Mucosa of descending colon (tissue), 3 donors: ENCODE measurements at regions of chr1 and their contacts with region 1.

Region 1: GRCh38 chr1:172398970-172399755 is 21.3 kb upstream of the C1orf105 start:
- DNase-seq: peak in 2 of 3 donors; percentile 28 to 40
- ATAC-seq: peak; percentile 83
- H3K4me3 ChIP-seq: no peak overlapping the region
- H3K4me1 ChIP-seq: peaks cover 15% of the 10 kb centered on the region
- CTCF ChIP-seq: peak; percentile 36

Region 2: GRCh38 chr1:172002725-172003345 is 396.3 kb before region 1 on chr1:
- intact Hi-C with region 1: loop called in 1 of 2 experiments (anchors 10 kb)
- DNase-seq: peak in 1 of 3 donors; percentile 60
- ATAC-seq: peak; percentile 34
- H3K4me3 ChIP-seq: no peak overlapping the region
- H3K4me1 ChIP-seq: no peaks in the 10 kb centered on the region
- CTCF ChIP-seq: peak; percentile 25

Region 3: GRCh38 chr1:172144445-172145061 is 254.6 kb before region 1 on chr1:
- intact Hi-C with region 1: loop called in 1 of 2 experiments (anchors 10 kb)
- DNase-seq: peak; percentile 40 to 58 (median 47)
- ATAC-seq: peak; percentile 81
- H3K4me3 ChIP-seq: no peak overlapping the region
- H3K4me1 ChIP-seq: no peaks in the 10 kb centered on the region
- CTCF ChIP-seq: no peak

Region 4: DNA sequence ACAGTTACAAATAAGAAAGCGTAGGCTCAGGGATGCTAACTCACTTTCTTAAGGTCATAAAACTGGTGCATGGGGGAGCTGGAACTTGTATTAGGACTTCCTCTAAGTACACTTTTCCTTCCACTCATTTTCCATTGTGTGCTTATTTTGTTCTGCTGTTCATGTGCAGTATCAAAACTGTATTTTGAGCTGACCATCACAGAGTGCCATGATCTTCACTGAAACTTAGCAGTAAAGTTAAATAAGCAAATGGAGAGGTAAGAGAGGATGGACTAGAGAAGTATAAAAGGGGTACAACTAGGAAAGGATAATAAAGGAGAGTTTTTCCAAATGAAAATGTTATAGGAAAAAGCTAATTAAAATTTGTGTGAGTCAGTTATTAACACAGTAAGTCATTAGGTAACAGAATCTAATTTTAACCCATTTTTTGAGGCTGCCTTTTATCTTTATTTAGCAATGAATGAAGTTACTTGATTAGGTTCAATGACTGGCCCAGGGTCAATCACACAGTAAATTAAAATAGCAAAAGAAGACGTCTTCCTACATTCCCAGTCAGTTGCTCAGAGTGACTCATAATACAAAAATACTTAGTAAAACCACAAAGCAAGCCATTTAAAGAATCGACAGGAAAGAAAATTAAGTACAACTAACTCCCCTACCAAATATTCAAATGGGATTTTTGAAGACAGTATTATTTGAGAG is 144.5 kb before region 1 on chr1:
- intact Hi-C with region 1: no loop called
- DNase-seq: no peak
- ATAC-seq: no peak
- H3K4me3 ChIP-seq: no peak overlapping the region
- H3K4me1 ChIP-seq: peaks cover 3% of the 10 kb centered on the region
- CTCF ChIP-seq: no peak

Region 5: DNA sequence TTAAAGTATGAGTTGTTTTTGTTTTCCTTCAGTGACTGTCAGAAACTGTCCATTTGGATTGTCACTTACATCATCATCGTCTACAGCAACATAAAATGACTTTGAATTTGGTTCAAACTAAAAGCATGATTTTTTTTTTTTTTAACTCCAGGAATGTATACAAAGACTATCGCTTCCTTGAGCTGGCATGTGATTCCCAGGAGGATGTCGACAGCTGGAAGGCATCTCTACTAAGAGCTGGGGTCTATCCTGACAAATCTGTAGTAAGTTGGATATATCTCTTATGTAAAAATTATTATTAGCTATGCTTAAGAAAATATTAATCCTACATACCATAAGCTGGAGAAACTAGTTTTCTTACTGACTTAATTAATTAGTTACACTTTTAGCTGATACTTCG is 90.6 kb before region 1 on chr1:
- intact Hi-C with region 1: no loop called
- DNase-seq: no peak
- ATAC-seq: no peak
- H3K4me3 ChIP-seq: no peak overlapping the region
- H3K4me1 ChIP-seq: no peaks in the 10 kb centered on the region
- CTCF ChIP-seq: no peak

Region 6: DNA sequence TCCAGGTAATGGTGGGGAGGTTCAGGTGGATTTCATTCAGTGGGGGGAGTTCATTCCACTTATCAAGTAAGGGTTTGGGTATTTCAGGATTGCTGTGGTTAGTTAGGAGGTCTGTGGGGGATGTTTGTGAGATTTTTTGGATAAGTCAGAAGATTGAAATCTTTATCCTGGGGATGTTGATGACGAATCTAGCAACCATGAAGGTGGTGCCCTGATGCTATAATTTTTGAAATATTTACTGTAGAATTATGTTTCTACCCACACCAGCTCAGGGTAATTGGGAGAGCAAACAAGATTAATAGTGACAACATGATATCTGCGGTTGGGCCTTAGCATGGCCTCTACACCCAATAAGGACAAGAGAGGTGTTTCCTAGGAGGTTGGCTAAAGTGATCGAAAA is 162.1 kb after region 1 on chr1:
- intact Hi-C with region 1: no loop called
- DNase-seq: no peak
- ATAC-seq: no peak
- H3K4me3 ChIP-seq: no peak overlapping the region
- H3K4me1 ChIP-seq: no peaks in the 10 kb centered on the region
- CTCF ChIP-seq: no peak